ENCODE measurements at regions of chr12 and their contacts with region 1.

Region 1: DNA sequence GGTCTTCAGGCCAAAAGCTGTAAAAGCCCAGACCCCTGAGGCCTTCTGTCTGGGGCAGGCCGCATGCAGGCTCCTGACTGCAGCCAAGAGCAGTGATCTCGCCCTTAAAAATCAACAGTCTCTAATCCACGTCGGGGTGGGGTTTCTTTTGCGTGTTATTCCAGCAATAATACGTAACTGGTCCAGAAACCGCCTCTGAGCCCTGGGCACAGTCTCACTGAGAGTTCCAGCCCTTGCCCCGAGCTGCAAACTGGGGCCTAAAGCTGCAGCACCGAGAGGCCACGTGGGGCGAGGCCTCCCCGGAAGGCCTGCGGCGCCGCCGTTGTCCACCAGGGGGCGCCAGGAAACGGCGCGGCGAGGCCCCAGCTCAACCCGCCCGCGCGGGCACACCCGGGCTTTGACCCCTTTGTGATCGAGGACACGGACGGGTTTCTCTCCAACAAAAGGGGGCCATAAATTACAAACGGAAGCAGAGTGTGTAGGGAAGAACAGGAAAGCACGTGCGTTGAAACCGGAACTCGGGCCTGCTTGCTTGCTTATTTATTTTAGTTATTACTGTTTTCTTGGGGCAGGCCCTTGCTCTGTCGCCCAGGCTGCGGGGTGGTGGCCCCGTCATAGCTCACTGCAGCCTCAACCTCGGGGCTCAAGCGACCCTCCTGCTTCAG is 87.2 kb downstream of the NINJ2 start:
- DNase-seq: peak; percentile 86 to 96
- H3K4me3 ChIP-seq: no peak overlapping the region
- H3K4me3 Mint-ChIP-seq: peak overlapping the region; percentile 55
- H3K27ac Mint-ChIP-seq: peak overlapping the region; percentile 67
- H3K4me1 ChIP-seq: peaks cover 52% of the 10 kb centered on the region
- H3K4me1 Mint-ChIP-seq: peaks cover 36% of the 10 kb centered on the region
- H3K27me3 ChIP-seq: no peaks in the 10 kb centered on the region
- H3K27me3 Mint-ChIP-seq: no peaks in the 10 kb centered on the region
- CTCF ChIP-seq: peak; percentile 96 to 100

Region 2: DNA sequence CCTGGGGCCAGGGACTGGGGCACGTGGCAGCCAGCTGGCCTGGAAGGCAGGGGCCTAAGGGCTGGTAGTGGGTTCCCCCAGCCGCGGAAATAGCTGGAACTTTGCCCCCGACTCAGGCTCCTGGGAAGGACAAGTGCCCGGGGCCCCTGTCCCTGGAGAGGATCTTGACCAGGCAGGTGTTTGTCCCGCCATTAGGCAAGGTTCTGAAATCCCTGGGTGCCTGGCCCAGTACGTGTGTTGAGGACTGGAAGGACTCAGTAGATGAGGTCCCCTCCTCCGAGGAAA is 22.1 kb before region 1 on chr12:
- CTCF ChIA-PET with region 1: interaction called, 12 read pairs
- POLR2A ChIA-PET with region 1: no interaction called
- intact Hi-C with region 1: no loop called
- DNase-seq: no peak
- H3K4me3 ChIP-seq: no peak overlapping the region
- H3K4me3 Mint-ChIP-seq: no peak overlapping the region
- H3K27ac Mint-ChIP-seq: peak overlapping the region; percentile 18
- H3K4me1 ChIP-seq: no peaks in the 10 kb centered on the region
- H3K4me1 Mint-ChIP-seq: peaks cover 18% of the 10 kb centered on the region
- H3K27me3 ChIP-seq: no peaks in the 10 kb centered on the region
- H3K27me3 Mint-ChIP-seq: no peaks in the 10 kb centered on the region
- CTCF ChIP-seq: no peak

Region 3: GRCh38 chr12:607526-608001 is 31.5 kb after region 1 on chr12:
- CTCF ChIA-PET with region 1: interaction called, 12 read pairs
- POLR2A ChIA-PET with region 1: interaction called, 3 read pairs
- intact Hi-C with region 1: no loop called
- DNase-seq: peak; percentile 68
- H3K4me3 ChIP-seq: no peak overlapping the region
- H3K4me3 Mint-ChIP-seq: no peak overlapping the region
- H3K27ac Mint-ChIP-seq: no peak overlapping the region
- H3K4me1 ChIP-seq: 0 out of 2 replicates have a peak, but pooled peaks cover 11% of the 10 kb centered on the region
- H3K4me1 Mint-ChIP-seq: no peaks in the 10 kb centered on the region
- H3K27me3 ChIP-seq: no peaks in the 10 kb centered on the region
- H3K27me3 Mint-ChIP-seq: no peaks in the 10 kb centered on the region
- CTCF ChIP-seq: no peak

Region 4: DNA sequence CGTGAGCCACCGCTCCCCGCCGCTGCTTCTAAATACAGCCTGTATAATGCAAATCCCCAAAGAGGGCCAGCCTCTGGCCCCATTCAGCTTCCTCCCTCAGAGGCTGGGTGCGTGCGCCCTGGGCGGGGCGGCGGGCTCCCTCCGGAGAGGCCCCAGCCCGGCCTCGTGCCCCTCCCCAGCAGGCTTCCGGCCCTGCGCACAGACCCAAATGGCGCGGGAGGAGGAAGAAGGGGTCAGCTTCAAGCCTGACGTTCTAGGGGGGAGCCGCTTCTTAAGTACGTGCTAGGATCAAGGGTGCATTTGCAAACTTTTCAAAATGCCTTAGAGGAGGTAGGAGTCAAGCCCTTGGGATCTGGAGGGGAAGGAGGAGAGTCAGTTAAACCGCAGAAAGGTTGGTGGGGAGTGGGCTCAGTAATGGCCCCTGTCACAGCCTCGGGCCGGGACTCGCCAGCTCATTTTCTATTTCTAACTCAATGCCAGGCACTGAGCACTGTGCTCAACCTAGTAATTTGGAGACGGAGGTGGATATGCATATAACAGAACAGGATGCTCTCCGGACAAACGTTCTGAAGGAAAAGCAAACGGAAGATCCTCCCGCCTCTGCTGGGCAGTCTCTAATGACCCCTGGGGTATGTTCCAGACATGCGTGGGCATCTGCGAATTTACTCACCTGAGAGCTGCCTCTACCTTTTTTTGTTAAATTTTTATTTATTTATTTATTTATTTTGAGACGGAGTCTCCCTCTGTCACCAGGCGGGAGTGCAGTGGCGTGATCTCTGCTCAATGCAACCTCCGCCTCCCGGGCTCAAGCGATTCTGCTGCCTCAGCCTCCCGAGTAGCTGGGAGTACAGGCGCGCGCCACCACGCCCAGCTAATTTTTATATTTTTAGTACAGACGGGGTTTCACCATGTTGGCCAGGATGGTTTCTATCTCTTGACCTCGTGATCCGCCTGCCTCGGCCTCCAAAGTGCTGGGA is 54.9 kb after region 1 on chr12:
- CTCF ChIA-PET with region 1: interaction called, 18 read pairs
- POLR2A ChIA-PET with region 1: interaction called, 15 read pairs
- intact Hi-C with region 1: loop called (anchors 1 kb)
- DNase-seq: no peak
- H3K4me3 ChIP-seq: no peak overlapping the region
- H3K4me3 Mint-ChIP-seq: peak overlapping the region; percentile 56
- H3K27ac Mint-ChIP-seq: peak overlapping the region; percentile 88
- H3K4me1 ChIP-seq: peaks cover 67% of the 10 kb centered on the region
- H3K4me1 Mint-ChIP-seq: peaks cover 57% of the 10 kb centered on the region
- H3K27me3 ChIP-seq: no peaks in the 10 kb centered on the region
- H3K27me3 Mint-ChIP-seq: no peaks in the 10 kb centered on the region
- CTCF ChIP-seq: no peak

Region 5: DNA sequence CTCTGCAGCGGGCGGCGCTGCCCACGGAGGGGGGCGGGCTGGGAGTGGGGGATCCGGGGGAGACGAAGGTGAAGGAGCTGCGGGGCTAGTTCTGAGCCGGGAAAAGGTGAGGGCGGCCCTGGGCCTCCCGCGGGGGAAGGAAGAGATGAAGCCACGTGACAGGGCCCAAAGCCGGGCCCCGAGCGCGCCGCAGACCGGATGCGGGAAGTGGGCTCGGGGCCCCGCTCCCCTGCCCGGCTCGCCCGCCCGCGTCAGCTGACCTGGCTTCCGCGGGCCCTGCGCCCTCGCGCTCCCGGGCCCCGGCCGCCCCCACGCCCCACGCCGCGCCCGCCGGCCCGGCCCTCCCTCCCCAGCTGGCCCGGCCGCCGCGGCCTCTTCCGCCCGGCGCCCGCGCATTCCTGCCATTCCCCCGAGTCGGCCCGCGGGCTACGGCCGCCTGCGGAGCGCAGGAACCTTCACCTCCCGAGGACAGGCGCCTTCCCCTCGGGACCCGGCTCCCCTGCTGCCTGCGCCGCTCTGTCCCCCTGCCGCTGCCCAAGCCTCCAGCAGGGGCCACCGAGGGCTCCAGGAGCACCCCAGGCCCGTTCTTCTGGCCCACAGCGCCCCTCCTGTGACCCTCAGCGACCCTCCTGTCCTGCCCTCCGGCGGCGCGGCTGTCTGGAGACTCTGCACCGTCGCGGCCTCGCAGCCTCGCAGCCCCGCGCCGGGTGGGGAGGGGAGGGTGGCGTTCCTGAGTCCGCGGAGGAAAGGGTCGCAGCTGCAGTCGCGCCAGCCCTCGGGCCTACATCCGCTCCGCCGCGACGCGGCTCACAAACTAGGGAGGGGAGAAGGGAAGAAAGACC is 66.8 kb after region 1 on chr12:
- CTCF ChIA-PET with region 1: interaction called, 14 read pairs
- POLR2A ChIA-PET with region 1: interaction called, 11 read pairs
- intact Hi-C with region 1: loop called (anchors 1 kb)
- DNase-seq: peak; percentile 90 to 93
- H3K4me3 ChIP-seq: peak overlapping the region; percentile 56
- H3K4me3 Mint-ChIP-seq: peak overlapping the region; percentile 78
- H3K27ac Mint-ChIP-seq: peak overlapping the region; percentile 62
- H3K4me1 ChIP-seq: peaks cover 20% of the 10 kb centered on the region
- H3K4me1 Mint-ChIP-seq: peaks cover 34% of the 10 kb centered on the region
- H3K27me3 ChIP-seq: no peaks in the 10 kb centered on the region
- H3K27me3 Mint-ChIP-seq: no peaks in the 10 kb centered on the region
- CTCF ChIP-seq: peak; percentile 74 to 89